BJ (cell line): ENCODE measurements at regions of chr1 and their contacts with region 1.

Region 1: GRCh38 chr1:8727809-8728213 is 89.6 kb downstream of the RERE start:
- DNase-seq: no peak
- H3K4me3 ChIP-seq: no peak overlapping the region
- H3K27me3 ChIP-seq: no peaks in the 10 kb centered on the region
- CTCF ChIP-seq: no peak

Region 2: DNA sequence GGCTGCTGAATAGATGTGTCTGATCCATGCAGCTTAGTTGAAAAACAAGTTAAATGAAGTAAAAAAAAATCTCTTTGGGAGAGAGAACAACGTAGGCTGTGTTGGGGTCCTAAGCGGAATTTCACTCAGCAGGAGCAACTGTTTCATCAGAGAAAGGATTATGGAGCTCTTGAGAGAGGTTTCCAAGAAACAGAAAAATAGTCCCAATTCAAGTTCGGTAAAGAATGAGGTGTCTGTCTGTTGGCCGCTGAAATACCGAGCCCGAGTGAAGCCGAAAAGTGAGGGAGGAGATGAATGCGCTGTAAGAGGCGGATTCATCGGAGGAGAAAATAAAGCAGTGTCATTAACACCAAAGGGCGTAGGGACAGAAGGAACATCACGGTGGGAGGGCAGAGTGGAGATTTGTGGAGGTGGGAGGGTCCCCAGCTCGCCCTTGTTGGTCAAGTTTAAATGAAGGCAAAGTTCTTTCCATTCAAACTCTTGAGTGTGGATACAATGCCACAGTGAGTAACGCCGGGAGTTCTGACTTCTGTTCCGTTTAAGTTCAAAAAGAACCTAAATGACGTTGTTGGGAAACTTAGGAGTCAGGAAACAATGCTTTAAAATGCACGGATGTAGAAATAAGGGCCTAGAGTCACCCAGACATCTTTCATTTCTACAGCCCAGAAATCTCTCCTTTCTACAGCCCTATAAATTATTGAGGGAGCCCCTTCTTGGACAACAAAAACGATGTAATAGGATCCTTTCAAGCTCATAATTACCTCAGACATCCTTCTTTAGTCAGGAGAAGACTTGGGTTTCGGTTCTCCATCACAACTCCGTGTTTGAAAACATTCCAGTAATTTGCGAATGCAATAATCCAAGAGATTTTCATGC is 425.5 kb before region 1 on chr1:
- CTCF ChIA-PET with region 1: no interaction called
- POLR2A ChIA-PET with region 1: no interaction called
- DNase-seq: no peak
- H3K4me3 ChIP-seq: no peak overlapping the region
- H3K27me3 ChIP-seq: no peaks in the 10 kb centered on the region; the same call in 1 of the 2 replicates
- CTCF ChIP-seq: no peak

Region 3: GRCh38 chr1:8560611-8561544 is 166.9 kb before region 1 on chr1:
- CTCF ChIA-PET with region 1: interaction called, 43 read pairs
- POLR2A ChIA-PET with region 1: no interaction called
- DNase-seq: no peak
- H3K4me3 ChIP-seq: no peak overlapping the region
- H3K27me3 ChIP-seq: no peaks in the 10 kb centered on the region
- CTCF ChIP-seq: peak; percentile 82

Region 4: GRCh38 chr1:8571200-8571984 is 156.4 kb before region 1 on chr1:
- CTCF ChIA-PET with region 1: interaction called, 11 read pairs
- POLR2A ChIA-PET with region 1: no interaction called
- DNase-seq: no peak
- H3K4me3 ChIP-seq: no peak overlapping the region
- H3K27me3 ChIP-seq: no peaks in the 10 kb centered on the region
- CTCF ChIP-seq: peak; percentile 42

Region 5: GRCh38 chr1:8671306-8671917 is 56.4 kb before region 1 on chr1:
- CTCF ChIA-PET with region 1: interaction called, 26 read pairs
- POLR2A ChIA-PET with region 1: no interaction called
- DNase-seq: no peak
- H3K4me3 ChIP-seq: no peak overlapping the region
- H3K27me3 ChIP-seq: no peaks in the 10 kb centered on the region
- CTCF ChIP-seq: peak; percentile 85

Region 6: DNA sequence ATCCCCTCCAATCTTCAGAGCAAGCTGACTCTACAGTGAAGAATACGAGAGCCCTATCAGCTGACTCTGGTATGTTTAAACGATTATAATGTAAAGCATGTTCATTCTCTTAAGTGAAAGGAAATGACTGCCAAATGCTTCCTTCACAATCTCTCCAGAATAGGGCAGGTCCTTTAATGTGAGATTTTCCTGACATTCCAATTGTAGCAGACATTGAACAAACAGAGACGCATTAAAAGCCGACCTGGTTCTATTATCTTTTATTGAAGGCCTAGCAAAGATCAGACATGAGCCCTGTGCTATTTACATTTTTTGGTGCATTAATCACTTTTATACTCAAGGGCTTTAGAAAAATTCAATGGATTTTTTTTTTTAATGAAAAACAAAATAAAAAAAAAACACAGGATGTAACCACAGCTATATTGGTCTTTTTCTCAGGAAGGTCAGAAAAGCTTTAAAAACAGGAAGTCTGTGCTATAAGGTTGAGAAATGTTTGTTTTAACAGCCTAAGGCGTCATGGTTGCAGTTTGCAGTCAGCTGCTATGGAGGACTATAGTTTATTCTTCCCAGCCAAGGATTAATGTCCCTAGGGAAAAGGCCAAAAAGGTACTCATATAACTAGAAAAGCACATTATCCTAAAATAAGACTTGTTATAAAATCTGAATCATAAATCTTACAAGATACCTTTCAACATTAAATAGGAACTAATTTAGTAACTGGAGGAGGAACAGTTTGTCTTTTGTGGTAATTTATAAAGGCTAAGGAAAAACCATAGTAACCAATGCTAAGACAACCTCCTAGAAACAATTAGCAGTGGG is 15.2 kb before region 1 on chr1:
- CTCF ChIA-PET with region 1: interaction called, 16 read pairs
- POLR2A ChIA-PET with region 1: no interaction called
- DNase-seq: peak; percentile 67
- H3K4me3 ChIP-seq: no peak overlapping the region
- H3K27me3 ChIP-seq: no peaks in the 10 kb centered on the region
- CTCF ChIP-seq: no peak

Region 7: DNA sequence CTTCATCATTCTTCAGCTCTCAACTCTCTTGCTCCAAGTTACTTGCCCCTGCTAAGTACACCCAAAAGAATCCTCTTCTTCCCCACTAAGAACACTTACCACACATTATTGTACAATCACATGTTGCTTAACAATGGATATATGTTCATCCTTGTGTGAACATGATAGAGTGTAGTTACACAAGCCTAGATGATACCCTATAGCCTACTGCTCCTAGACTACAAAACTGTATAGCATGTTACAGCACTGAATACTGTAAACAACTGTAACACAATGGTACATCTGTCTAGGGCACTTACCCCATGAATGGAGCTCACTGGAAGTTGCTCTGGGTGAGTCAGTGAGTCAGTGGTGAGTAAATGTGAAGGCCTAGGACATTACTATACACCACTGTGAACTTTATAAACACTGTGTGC is 12.2 kb after region 1 on chr1:
- CTCF ChIA-PET with region 1: interaction called, 28 read pairs
- POLR2A ChIA-PET with region 1: no interaction called
- DNase-seq: peak; percentile 19
- H3K4me3 ChIP-seq: no peak overlapping the region
- H3K27me3 ChIP-seq: no peaks in the 10 kb centered on the region
- CTCF ChIP-seq: no peak

Region 8: GRCh38 chr1:8848663-8849386 is 121.0 kb after region 1 on chr1:
- CTCF ChIA-PET with region 1: interaction called, 38 read pairs
- POLR2A ChIA-PET with region 1: no interaction called
- DNase-seq: peak; percentile 60
- H3K4me3 ChIP-seq: no peak overlapping the region
- H3K27me3 ChIP-seq: 0 out of 2 replicates have a peak, but pooled peaks cover 1% of the 10 kb centered on the region
- CTCF ChIP-seq: peak; percentile 97